SK-N-SH (cell line): ENCODE measurements at regions of chr3 and their contacts with region 1.

Region 1: GRCh38 chr3:184428561-184429175 is 48.8 kb downstream of the CHRD start:
- DNase-seq: no peak
- H3K4me3 ChIP-seq: no peak overlapping the region
- H3K27ac ChIP-seq: no peak overlapping the region
- H3K4me1 ChIP-seq: no peaks in the 10 kb centered on the region
- H3K27me3 ChIP-seq: no peaks in the 10 kb centered on the region; the same call in 1 of the 2 replicates
- CTCF ChIP-seq: no peak
- EP300 ChIP-seq: no peak
- RAD21 ChIP-seq: no peak

Region 2: DNA sequence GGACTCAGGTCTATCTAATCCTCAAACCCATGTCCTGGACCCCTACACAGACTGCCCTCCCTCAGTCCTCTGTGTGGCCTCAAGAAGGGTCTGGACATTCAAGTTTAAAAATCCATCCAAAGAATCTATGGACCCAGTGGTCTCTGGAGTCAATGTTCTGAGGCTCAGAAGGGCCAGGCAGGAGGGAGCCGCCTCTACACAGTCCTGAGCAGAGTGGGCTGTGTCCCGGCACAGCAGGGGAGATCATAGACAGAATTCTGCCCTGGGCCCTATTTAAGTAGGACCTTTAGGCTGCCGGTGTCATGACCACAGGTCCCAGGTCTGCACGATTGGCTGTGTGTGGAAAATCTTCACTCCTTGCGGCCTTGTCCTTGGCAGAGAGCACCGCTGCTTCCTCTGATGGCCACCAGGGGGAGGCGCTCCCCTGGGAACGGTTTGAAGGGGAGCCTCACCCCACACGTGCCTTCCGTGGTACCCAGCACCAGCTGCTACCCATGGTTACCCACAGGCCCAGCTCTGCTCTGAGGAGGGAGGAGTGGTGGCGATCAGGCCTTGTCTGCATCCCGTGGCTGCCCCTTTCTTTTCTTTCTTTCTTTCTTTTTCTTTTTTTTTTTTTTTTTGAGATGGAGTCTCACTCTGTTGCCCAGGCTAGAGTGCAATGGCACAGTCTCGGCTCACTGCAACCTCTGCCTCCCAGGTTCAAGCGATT is 10.9 kb before region 1 on chr3:
- CTCF ChIA-PET with region 1: interaction called, 20 read pairs
- POLR2A ChIA-PET with region 1: no interaction called
- DNase-seq: peak; percentile 85
- H3K4me3 ChIP-seq: no peak overlapping the region; a peak in 1 of 4 replicates
- H3K27ac ChIP-seq: no peak overlapping the region
- H3K4me1 ChIP-seq: no peaks in the 10 kb centered on the region; a peak in 1 of 4 replicates
- H3K27me3 ChIP-seq: no peaks in the 10 kb centered on the region
- CTCF ChIP-seq: peak; percentile 94
- EP300 ChIP-seq: no peak
- RAD21 ChIP-seq: peak; percentile 87

Region 3: DNA sequence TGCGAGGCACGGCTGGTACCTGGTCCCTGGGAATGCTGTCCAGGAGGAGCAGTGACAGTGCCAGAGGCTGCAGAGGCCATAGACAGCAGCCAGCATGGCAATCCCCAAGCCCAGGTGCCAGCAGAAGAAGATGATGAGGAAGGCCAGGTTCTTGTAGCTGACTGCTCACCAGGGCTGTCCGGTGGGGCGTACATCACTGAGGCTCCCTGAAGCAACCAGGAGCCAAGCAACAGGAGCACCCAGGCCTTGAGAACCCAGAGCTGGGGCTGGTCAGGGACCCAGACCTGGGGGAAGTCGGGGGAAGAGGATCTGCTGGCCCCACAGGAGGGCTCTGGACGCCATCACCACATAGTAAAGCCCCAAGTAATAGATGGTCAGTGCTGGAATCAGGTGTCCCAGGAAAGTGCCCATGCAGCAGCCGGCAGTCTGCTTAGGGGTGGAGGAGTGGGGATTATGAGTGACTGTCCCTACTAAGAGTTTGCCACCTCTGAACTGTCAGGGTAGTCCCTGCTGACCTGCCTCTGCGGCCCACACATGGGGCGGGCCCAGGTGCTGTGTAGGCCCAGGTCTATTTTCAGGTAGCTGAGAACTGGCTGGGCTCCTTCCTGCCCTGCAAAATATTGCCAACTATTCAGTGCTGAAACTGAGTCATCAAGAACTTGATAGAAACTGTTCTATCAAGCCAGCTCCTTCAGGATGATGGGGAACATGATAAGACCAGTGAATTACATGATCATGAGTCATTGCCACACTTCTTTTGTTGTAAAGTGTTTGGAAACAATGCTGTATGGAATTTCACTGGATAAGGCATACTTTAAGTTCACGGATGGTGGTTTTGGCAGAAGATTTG is 19.9 kb after region 1 on chr3:
- CTCF ChIA-PET with region 1: no interaction called
- POLR2A ChIA-PET with region 1: no interaction called
- DNase-seq: no peak
- H3K4me3 ChIP-seq: no peak overlapping the region
- H3K27ac ChIP-seq: peak overlapping the region in 1 of 2 experiments; percentile 52; a peak in 2 of 4 replicates
- H3K4me1 ChIP-seq: no peaks in the 10 kb centered on the region
- H3K27me3 ChIP-seq: no peaks in the 10 kb centered on the region
- CTCF ChIP-seq: no peak
- EP300 ChIP-seq: peak in 1 of 2 experiments; percentile 87; a peak in 2 of 4 replicates
- RAD21 ChIP-seq: no peak